ENCODE measurements at regions of chr6 and their contacts with region 1.

Region 1: GRCh38 chr6:99868074-99868702 is 125.8 kb downstream of the MCHR2 start:
- DNase-seq: peak; percentile 86
- ATAC-seq: peak; percentile 59

Region 2: GRCh38 chr6:99822741-99823512 is 45.3 kb before region 1 on chr6:
- intact Hi-C with region 1: no loop called
- DNase-seq: no peak
- ATAC-seq: no peak

Region 3: GRCh38 chr6:100096341-100096740 is 228.2 kb after region 1 on chr6:
- intact Hi-C with region 1: loop called (anchors 2 kb)
- DNase-seq: no peak
- ATAC-seq: no peak

Measured in Right ventricle myocardium inferior (tissue), 1 donor.